ENCODE measurements at regions of chr19 and their contacts with region 1.

Region 1: GRCh38 chr19:15091901-15092753 is 10.1 kb downstream of the OR1I1 start:
- DNase-seq: peak in 16 of 42 donors; percentile 10 to 74 (median 38)

Region 2: GRCh38 chr19:15149737-15150136 is 57.6 kb after region 1 on chr19:
- intact Hi-C with region 1: loop called (anchors 2 kb)
- DNase-seq: no peak